IMR-90 (cell line): ENCODE measurements at regions of chr1 and their contacts with region 1.

Region 1: DNA sequence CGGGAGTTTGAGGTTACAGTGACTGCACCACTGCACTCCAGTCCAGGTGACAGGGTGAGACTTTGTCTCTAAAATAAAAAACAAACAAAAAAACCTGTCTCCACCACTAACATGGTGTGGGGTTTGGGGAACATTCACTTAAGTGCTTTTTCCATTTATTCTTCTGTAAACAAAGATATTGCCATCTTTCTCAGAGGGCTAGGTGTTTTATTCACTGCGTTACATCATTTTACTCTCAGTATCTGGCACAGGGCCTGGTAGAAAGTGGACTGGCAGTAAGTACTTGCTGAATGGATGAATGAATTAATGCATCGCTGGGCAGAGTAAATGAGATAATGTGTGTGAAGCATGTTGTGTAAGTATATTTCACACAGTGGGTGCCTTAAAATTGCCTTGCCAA is 20.1 kb downstream of the KIAA0040 start:
- DNase-seq: no peak
- ATAC-seq: no peak
- H3K4me3 ChIP-seq: no peak overlapping the region
- H3K27ac ChIP-seq: no peak overlapping the region
- H3K4me1 ChIP-seq: no peaks in the 10 kb centered on the region
- H3K27me3 ChIP-seq: no peaks in the 10 kb centered on the region
- CTCF ChIP-seq: no peak
- POLR2A ChIP-seq: no peak
- RAD21 ChIP-seq: no peak

Region 2: GRCh38 chr1:175154629-175155472 is 17.7 kb before region 1 on chr1:
- CTCF ChIA-PET with region 1: no interaction called
- POLR2A ChIA-PET with region 1: no interaction called
- dilution Hi-C with region 1: no loop called
- in situ Hi-C with region 1: no loop called
- intact Hi-C with region 1: no loop called
- DNase-seq: peak; percentile 35
- ATAC-seq: peak; percentile 66
- H3K4me3 ChIP-seq: no peak overlapping the region
- H3K27ac ChIP-seq: no peak overlapping the region
- H3K4me1 ChIP-seq: no peaks in the 10 kb centered on the region
- H3K27me3 ChIP-seq: peaks cover 3% of the 10 kb centered on the region; the same call in 1 of the 2 replicates
- CTCF ChIP-seq: peak; percentile 72
- POLR2A ChIP-seq: no peak
- RAD21 ChIP-seq: peak; percentile 59

Region 3: DNA sequence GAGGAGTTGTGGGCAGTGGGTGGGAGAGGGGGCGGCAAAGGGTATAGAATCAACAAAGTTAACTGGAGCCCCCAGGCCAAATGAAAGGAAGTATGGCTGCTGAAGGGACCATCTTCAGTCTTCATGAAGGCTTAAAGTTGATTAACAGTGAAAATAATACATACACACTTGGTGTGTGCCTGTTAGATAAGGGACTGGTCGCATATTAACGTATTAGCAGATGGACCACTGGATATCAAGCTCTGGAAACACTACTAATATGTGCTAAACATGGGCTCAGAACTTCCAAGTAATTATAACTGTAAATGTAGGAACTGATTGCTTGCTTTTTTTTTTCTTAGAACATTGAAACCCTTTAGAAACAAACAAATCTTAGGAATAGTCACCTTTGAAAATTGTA is 244.8 kb after region 1 on chr1:
- CTCF ChIA-PET with region 1: no interaction called
- POLR2A ChIA-PET with region 1: no interaction called
- dilution Hi-C with region 1: no loop called
- in situ Hi-C with region 1: no loop called
- intact Hi-C with region 1: loop called (anchors 2 kb)
- DNase-seq: no peak
- ATAC-seq: no peak
- H3K4me3 ChIP-seq: no peak overlapping the region
- H3K27ac ChIP-seq: no peak overlapping the region
- H3K4me1 ChIP-seq: no peaks in the 10 kb centered on the region
- H3K27me3 ChIP-seq: no peaks in the 10 kb centered on the region
- CTCF ChIP-seq: no peak
- POLR2A ChIP-seq: no peak
- RAD21 ChIP-seq: no peak